Common myeloid progenitor, CD34-positive (primary cell): ENCODE measurements at regions of chr15 and their contacts with region 1.

Region 1: DNA sequence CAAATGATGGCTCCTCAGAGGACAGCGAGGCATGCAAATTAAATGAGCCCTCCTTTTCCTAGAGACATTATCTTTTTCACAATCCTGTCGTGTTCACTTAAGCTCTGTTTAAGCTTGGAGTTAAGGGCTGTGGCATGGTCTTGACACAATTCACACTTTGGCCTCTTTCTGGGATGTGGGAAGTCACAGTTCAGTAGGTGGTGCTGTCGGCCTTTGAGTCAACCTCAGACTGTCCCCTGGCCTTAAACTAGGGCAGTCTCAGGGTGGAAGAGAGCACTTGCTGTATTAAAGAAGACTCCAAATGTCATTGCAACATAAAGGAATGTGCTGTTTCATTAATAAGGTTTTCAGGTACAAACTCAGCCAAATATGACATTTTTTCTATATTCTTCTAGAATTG is 351.0 kb downstream of the MCTP2 start:
- DNase-seq: peak; percentile 73 to 79 (median 75)
- H3K4me3 ChIP-seq: no peak overlapping the region
- H3K27ac ChIP-seq: no peak overlapping the region
- H3K4me1 ChIP-seq: peaks cover 9 to 31% (median 21%) of the 10 kb centered on the region in 4 experiments
- H3K27me3 ChIP-seq: peaks cover 24 to 87% (median 61%) of the 10 kb centered on the region in 5 experiments

Region 2: DNA sequence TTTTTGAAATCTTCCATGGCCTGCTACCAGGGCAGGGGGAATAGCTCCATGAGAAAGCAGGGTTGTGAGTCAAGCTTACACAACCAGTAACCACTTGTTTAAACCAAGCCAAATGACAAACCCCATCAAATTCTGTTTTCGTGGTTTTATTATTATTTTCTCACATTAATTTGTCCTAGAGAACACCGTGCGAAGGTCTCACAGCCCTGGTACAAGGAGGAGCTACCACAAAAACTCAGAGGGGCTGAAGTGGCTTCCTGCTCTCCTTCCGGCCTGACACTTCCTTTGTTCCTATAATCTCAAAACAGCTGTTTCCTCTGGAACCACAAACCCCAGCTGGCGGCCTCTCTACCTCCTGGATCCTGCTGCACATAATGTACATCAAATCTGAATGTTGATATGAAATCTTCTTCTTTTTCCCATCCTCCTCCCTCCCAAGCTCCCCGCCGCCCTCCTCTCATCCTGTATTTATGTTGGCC is 24.8 kb after region 1 on chr15:
- CTCF ChIA-PET with region 1: interaction called, 36 read pairs
- POLR2A ChIA-PET with region 1: interaction called, 5 read pairs
- DNase-seq: peak; percentile 89 to 97 (median 96)
- H3K4me3 ChIP-seq: peak overlapping the region in 2 of 7 experiments; percentile 5 to 25
- H3K27ac ChIP-seq: no peak overlapping the region
- H3K4me1 ChIP-seq: peaks cover 13 to 45% (median 28%) of the 10 kb centered on the region in 4 experiments
- H3K27me3 ChIP-seq: peaks cover under 1 to 74% (median 41%) of the 10 kb centered on the region in 5 experiments

Region 3: DNA sequence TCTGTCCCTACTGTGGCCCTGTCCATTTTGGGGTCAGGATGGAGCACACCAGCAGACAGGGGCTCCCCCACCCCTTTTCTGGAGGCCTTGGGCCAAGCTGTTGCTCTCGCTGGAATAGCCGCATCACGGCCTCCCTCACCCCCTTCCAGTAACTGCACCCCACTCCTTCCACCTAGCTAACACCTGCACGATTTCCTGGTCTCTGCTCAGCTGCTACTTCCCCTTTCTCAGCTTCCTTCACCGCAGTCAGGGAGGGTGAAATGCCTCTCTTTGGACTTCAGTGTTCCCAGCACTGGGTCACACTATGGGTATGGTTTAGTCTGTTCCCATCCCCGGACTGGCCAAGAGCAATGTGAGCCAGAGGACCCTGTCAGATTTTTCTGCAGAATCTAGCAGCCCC is 49.2 kb after region 1 on chr15:
- CTCF ChIA-PET with region 1: interaction called, 22 read pairs
- POLR2A ChIA-PET with region 1: no interaction called
- DNase-seq: peak; percentile 44 to 82 (median 75)
- H3K4me3 ChIP-seq: peak overlapping the region in 1 of 7 experiments; percentile 14
- H3K27ac ChIP-seq: no peak overlapping the region
- H3K4me1 ChIP-seq: peaks cover 0 to 14% (median 12%) of the 10 kb centered on the region in 4 experiments
- H3K27me3 ChIP-seq: peaks cover 3 to 80% (median 22%) of the 10 kb centered on the region in 5 experiments

Region 4: GRCh38 chr15:94670438-94671034 is 88.2 kb after region 1 on chr15:
- CTCF ChIA-PET with region 1: interaction called, 74 read pairs
- POLR2A ChIA-PET with region 1: no interaction called
- DNase-seq: peak; percentile 42 to 66 (median 56)
- H3K4me3 ChIP-seq: no peak overlapping the region
- H3K27ac ChIP-seq: no peak overlapping the region
- H3K4me1 ChIP-seq: no peaks in the 10 kb centered on the region
- H3K27me3 ChIP-seq: peaks cover 0 to 79% (median 35%) of the 10 kb centered on the region in 5 experiments